PC-9 (cell line): ENCODE measurements at regions of chr11 and their contacts with region 1.

Region 1: DNA sequence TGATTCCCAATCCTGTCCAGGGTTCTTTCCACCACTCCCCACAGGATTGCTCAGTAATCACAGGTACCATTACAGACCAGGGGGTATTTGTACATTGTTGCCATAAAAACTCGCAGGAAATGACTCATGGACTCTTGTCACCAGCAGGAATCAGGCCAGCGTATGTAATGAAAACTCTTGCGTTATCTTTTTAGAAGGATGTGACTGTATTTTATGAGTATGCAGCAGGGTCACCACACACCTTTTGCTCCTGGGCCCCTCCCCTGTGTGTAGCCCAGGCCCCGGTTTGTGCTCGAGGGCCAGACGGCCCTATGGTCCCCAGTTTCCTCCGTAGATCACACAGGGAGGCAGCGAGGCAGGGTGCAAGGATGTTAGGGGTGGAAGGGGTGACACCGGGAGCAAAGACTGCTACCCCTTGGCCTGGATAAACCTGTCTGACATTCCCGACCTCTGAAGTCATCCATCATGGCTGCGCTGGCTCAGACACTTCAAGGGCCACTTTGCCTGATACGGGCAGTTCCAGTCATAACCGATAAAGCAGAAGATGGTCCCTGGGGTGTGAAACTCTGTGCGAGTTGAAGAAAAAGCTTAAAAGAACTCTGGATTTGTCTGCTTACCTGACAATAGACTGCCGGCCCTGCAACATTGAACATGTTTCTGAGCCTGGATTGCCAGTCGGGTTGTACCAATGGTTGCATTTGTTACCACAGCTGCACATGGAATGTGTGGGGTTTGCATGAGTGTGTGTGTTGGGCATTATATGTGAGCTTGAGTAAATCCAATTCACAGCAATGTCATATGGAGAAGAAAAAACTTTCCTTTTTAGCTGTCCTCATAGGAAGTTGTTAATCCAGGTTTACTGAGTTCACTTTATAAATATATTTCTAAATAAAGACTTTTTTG is 57.0 kb downstream of the MICAL2 start:
- DNase-seq: peak; percentile 64 to 95
- H3K4me3 ChIP-seq: peak overlapping the region; percentile 34; the same call in 1 of the 2 replicates
- H3K27ac ChIP-seq: peak overlapping the region; percentile 95
- H3K4me1 ChIP-seq: peaks cover 69% of the 10 kb centered on the region
- H3K27me3 ChIP-seq: no peaks in the 10 kb centered on the region
- CTCF ChIP-seq: no peak

Region 2: GRCh38 chr11:12110201-12110713 is 57.1 kb before region 1 on chr11 and contains the start of gene MICAL2:
- CTCF ChIA-PET with region 1: no interaction called
- POLR2A ChIA-PET with region 1: interaction called, 16 read pairs
- intact Hi-C with region 1: no loop called
- DNase-seq: peak; percentile 71 to 87
- H3K4me3 ChIP-seq: peak within 1 kb of the TSS; percentile 81
- H3K27ac ChIP-seq: peak within 1 kb of the TSS; percentile 41; the same call in 1 of the 2 replicates
- H3K4me1 ChIP-seq: peaks cover 20% of the 10 kb centered on the region
- H3K27me3 ChIP-seq: no peaks in the 10 kb centered on the region
- CTCF ChIP-seq: no peak
- total RNA-seq, gene MICAL2: 30.5 and 32.4 TPM in 2 replicates

Region 3: GRCh38 chr11:12224537-12224893 is 57.2 kb after region 1 on chr11:
- CTCF ChIA-PET with region 1: no interaction called
- POLR2A ChIA-PET with region 1: interaction called, 17 read pairs
- intact Hi-C with region 1: loop called (anchors 10 kb)
- DNase-seq: peak; percentile 78 to 79
- H3K4me3 ChIP-seq: peak overlapping the region; percentile 41; the same call in 1 of the 2 replicates
- H3K27ac ChIP-seq: peak overlapping the region; percentile 94
- H3K4me1 ChIP-seq: peaks cover 70% of the 10 kb centered on the region
- H3K27me3 ChIP-seq: no peaks in the 10 kb centered on the region
- CTCF ChIP-seq: no peak